GM13976 (cell line): ENCODE measurements at regions of chr15 and their contacts with region 1.

Region 1: DNA sequence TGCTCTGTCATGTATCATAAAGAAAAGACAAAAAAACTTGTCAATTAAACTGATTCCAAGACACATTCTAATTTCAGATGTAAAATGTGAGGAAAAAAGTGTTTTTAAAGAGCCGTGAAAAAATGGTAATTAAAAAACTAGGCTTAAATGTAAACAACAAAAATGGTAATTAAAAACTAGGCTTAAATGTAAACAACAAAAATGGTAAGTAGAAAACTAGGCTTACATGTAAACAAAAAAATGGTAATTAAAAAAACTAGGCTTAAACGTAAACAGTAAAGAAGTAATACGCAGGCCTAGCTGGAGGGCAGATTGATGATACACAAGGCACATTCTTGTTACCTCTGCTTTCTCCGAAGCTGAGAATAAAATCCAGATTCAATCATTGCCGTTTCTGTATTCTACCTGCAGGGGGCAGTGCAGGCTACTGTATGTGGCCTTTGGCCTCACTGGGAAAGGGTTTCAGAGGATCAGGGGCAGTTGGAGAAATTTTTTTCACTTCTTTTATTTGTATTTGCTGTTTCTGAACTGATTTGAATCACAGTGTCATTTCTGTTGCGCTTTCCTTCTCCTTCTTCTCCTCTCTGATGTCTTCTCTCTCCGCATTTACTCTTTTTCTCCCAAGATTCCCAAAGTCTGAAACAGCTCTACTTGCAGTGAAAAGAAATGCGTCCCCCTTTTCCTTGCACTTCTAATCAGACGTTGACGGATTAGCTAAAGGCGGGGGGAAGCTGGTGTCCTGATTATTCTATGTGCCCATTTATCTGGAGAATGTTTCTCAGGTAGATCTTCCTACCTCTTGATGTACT is 67.2 kb upstream of the MCTP2 start:
- DNase-seq: peak; percentile 55
- CTCF ChIP-seq: peak; percentile 70

Region 2: GRCh38 chr15:93566762-93567161 is 597.4 kb before region 1 on chr15:
- in situ Hi-C with region 1: no loop called
- DNase-seq: no peak
- CTCF ChIP-seq: no peak

Region 3: DNA sequence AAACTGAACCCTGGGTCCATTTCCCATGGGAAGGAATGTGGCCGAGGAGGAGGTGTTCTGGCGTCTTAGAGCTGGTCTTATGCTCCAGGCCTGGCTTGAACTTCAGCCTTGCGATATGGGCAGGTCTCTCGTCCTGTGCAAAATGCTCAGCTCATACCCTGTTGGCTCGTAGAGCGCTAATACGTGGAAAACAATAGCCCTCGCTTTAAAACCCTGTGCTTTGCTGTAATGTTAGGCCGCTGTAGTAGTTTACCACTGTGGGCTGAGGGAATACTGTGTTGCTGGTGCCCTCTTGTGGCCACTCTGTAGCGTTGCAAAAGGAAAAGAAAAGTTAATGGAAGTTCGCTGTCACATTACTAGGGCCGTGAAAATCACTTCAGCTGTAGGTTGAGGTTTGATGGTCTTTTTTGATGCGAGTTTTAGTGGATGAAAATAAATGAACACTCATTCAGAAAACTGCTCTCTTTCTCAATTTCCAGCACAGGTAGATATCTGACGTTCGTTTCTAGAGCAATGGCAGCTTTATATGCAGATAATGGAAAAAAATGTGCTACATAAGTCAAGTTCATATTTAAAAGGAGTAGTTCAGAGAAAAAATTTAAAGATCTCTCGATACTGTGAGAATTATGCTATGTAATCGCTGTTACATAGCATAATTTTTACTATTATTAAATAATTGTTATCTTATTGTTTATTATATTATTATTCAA is 160.1 kb after region 1 on chr15:
- in situ Hi-C with region 1: loop called (anchors 5 kb)
- DNase-seq: peak; percentile 57
- CTCF ChIP-seq: peak; percentile 83